Thyroid gland (tissue), 4 donors: ENCODE measurements at regions of chr10 and their contacts with region 1.

Region 1: DNA sequence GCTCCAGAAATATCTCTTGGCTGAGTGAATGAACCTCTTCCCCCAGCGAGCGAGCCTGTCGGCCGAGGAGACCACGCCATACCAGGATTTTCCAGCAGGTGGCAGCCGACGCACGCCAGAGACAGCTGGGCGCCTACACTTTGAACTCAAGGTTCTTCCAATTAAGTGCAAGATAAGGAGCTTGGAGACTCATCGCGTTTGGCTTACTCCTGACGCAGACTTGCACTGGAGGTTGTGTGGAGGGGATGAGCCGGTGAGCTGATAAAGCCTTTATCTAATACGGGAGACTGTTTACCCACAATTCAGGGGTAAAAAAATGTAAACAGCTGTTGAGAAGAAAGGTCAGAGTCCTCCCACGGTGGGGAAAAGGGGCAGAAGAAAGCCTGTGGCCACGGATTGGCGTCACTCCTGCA is 45.9 kb upstream of the EMX2 start:
- DNase-seq: peak; percentile 66 to 71
- H3K4me3 ChIP-seq: no peak overlapping the region
- H3K27ac ChIP-seq: no peak overlapping the region
- H3K4me1 ChIP-seq: no peaks in the 10 kb centered on the region
- H3K27me3 ChIP-seq: no peaks in the 10 kb centered on the region
- CTCF ChIP-seq: peak; percentile 82 to 96 (median 88)
- POLR2A ChIP-seq: no peak

Region 2: GRCh38 chr10:116783011-116783655 is 713.5 kb before region 1 on chr10:
- intact Hi-C with region 1: no loop called
- DNase-seq: no peak
- H3K4me3 ChIP-seq: no peak overlapping the region
- H3K27ac ChIP-seq: no peak overlapping the region
- H3K4me1 ChIP-seq: peaks cover 7 to 10% of the 10 kb centered on the region in 2 donors
- H3K27me3 ChIP-seq: no peaks in the 10 kb centered on the region
- CTCF ChIP-seq: no peak
- POLR2A ChIP-seq: no peak

Region 3: GRCh38 chr10:117112220-117112619 is 384.4 kb before region 1 on chr10:
- intact Hi-C with region 1: no loop called
- DNase-seq: no peak
- H3K4me3 ChIP-seq: no peak overlapping the region
- H3K27ac ChIP-seq: no peak overlapping the region
- H3K4me1 ChIP-seq: no peaks in the 10 kb centered on the region
- H3K27me3 ChIP-seq: no peaks in the 10 kb centered on the region
- CTCF ChIP-seq: no peak
- POLR2A ChIP-seq: no peak

Region 4: DNA sequence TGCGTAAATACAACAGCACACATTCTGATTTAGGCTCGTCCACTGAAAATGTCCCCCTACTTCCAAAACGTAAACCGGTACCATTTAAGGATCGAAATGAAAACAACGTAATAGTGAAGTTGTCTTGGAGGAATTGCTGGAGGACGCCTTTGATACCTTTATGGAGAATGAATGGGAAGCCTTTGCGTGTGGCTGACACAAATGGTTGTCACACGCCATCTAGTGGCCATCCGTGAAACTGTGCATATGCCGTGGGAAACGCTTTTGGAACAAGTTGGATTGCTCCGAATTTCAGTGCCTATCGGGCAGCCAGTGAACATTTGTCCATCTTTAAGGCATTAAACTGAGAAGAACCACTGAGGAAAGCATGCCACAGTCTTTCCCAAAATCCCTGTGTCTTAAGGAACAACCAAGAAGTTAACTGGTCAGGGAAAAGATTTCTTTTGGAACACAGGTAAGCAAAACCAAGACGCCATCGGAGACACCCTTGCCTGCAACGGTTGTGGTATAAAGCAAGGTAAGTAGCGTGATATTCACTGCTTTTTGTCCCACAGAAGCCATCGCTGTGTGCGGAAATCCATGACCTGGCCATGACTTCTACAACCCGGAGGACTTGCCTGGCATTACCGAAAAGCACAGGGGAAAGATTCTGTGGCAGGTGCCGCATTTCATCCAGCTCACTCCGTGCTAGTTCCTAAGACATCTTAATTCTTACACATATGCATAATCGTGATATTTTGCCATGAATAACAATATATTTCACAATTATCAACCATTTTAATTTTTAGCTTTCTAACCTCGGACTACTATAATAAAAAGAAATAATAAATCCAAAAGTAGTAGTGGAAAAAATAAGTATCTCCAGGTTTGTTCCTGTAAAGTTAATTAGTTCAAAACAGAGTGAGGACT is 744.9 kb after region 1 on chr10:
- intact Hi-C with region 1: loop called (anchors 5 kb)
- DNase-seq: peak; percentile 82 to 86
- H3K4me3 ChIP-seq: no peak overlapping the region
- H3K27ac ChIP-seq: no peak overlapping the region
- H3K4me1 ChIP-seq: no peaks in the 10 kb centered on the region
- H3K27me3 ChIP-seq: peaks cover 5% of the 10 kb centered on the region
- CTCF ChIP-seq: peak; percentile 80 to 95 (median 88)
- POLR2A ChIP-seq: no peak

Region 5: GRCh38 chr10:118459726-118460193 is 963.1 kb after region 1 on chr10:
- intact Hi-C with region 1: loop called (anchors 10 kb)
- DNase-seq: peak; percentile 43 to 57
- H3K4me3 ChIP-seq: no peak overlapping the region
- H3K27ac ChIP-seq: no peak overlapping the region
- H3K4me1 ChIP-seq: no peaks in the 10 kb centered on the region
- H3K27me3 ChIP-seq: no peaks in the 10 kb centered on the region
- CTCF ChIP-seq: peak in 5 of 6 experiments; percentile 37 to 80 (median 53)
- POLR2A ChIP-seq: no peak